A549 (cell line): ENCODE measurements at regions of chr19 and their contacts with region 1.

Region 1: DNA sequence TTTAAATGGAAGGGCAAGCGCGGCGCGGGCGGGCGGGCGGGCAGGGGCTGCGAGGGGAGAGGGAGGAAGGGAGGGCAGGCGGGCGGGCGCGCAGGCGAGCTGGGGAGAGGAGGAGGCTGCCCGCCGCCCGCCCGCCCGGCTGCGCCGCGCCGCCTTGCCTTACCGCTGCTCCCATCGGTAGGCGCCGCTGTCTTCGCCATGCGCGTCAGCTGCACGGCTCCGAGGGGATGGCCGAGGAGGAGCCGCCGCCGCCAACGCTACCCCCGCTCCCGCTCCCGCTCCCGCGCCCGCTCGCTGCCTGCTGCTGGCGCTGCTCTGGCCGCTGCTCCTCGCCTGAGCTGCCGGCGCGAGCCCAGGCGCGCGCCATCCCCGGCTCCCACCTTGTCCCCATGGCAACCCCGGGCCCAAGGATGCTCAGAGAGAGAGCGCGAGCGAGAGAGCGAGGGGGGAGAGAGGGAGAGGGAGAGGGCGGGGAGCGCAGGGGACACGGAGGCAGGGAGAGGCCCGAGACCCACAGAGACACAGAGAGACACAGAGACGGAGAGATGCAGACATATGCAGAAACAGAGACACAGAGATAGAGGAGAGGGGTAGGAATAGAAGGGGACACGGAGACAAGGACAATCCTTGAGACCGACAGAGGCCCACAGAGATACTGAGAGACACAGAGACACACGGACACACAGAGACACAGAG is 40.3 kb downstream of the DEDD2 start:
- DNase-seq: peak; percentile 90
- ATAC-seq: peak; percentile 84 to 95
- H3K4me3 ChIP-seq: peak overlapping the region; percentile 56
- H3K27ac ChIP-seq: peak overlapping the region in 1 of 2 experiments; percentile 52; a peak in 2 of 6 replicates
- H3K4me1 ChIP-seq: peaks cover 16% of the 10 kb centered on the region
- CTCF ChIP-seq: peak; percentile 73
- EP300 ChIP-seq: no peak
- POLR2A ChIP-seq: no peak
- RAD21 ChIP-seq: peak in 1 of 2 experiments; percentile 39; a peak in 2 of 5 replicates

Region 2: DNA sequence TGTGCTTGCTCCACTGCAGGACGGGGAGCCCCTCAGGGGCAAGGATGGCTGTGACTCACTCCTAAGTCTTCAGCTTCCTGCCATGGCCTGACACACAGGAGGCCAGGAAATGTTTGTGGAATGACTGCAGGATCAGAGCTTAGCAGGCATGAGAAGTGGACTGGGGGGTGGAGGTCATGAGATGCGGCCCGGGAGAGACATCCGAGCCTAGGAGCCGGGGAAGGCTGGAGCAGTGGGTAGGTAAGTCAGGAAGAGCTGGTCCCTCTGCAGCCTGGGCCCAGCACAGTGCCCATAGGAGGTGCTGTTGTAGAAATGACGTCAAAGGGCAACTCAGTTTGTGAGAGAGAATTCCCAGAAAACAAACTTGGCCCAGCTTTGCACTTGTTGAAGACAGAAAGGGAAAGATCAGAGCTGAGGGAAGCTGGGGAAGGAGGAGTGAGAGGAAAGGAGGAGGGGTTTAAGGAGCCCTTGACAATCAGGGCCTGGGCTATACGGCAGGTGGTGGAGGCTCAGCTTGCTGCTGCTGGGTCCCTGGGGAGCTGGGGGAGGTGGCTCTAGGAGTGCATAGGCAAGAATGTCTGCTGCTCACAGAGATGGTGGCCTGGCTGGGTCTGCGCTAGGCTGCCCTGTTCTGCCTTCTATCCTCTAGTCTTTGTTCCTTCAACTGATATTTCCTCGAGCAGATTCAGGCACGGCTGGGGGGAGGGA is 63.3 kb before region 1 on chr19:
- CTCF ChIA-PET with region 1: interaction called, 213 read pairs
- POLR2A ChIA-PET with region 1: no interaction called
- DNase-seq: peak; percentile 88 to 97
- ATAC-seq: peak; percentile 75 to 90
- H3K4me3 ChIP-seq: no peak overlapping the region
- H3K27ac ChIP-seq: peak overlapping the region; percentile 57 to 75
- H3K4me1 ChIP-seq: peaks cover 28% of the 10 kb centered on the region
- CTCF ChIP-seq: peak; percentile 55
- EP300 ChIP-seq: no peak
- POLR2A ChIP-seq: no peak
- RAD21 ChIP-seq: no peak

Region 3: DNA sequence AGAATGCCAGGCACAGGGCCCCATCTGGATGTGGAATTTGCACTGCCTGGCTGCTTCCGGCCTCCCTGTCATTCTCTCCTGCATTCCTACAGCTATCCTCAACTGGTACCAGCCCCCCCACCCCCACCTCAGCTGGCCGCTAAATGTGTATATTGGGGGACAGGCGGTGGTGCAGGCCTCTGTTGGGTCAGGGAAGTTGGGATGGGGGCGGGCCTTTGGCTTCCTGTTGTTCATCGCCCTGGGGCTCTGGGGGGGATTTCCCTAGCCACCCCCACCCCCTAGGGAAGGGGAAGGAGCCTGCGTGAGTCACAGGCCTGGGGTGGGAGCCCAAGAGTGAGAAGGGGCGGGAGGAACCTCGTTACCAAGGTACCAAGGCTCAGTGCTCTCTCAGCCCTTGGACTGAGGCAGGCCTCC is 55.5 kb before region 1 on chr19:
- CTCF ChIA-PET with region 1: interaction called, 213 read pairs
- POLR2A ChIA-PET with region 1: no interaction called
- DNase-seq: peak in 1 of 2 experiments; percentile 66
- ATAC-seq: peak; percentile 10 to 37; a peak in 3 of 6 replicates
- H3K4me3 ChIP-seq: no peak overlapping the region
- H3K27ac ChIP-seq: peak overlapping the region in 1 of 2 experiments; percentile 56; a peak in 3 of 6 replicates
- H3K4me1 ChIP-seq: peaks cover 14% of the 10 kb centered on the region
- CTCF ChIP-seq: no peak
- EP300 ChIP-seq: no peak
- POLR2A ChIP-seq: no peak
- RAD21 ChIP-seq: no peak

Region 4: GRCh38 chr19:42140125-42140754 is 36.9 kb before region 1 on chr19:
- CTCF ChIA-PET with region 1: interaction called, 323 read pairs
- POLR2A ChIA-PET with region 1: interaction called, 3 read pairs
- DNase-seq: peak in 1 of 2 experiments; percentile 53
- ATAC-seq: peak; percentile 72 to 81
- H3K4me3 ChIP-seq: no peak overlapping the region
- H3K27ac ChIP-seq: no peak overlapping the region
- H3K4me1 ChIP-seq: no peaks in the 10 kb centered on the region
- CTCF ChIP-seq: no peak
- EP300 ChIP-seq: no peak
- POLR2A ChIP-seq: no peak
- RAD21 ChIP-seq: 0 out of 5 replicates have a peak, but pooled peaks of 1 of the 2 experiments have one; percentile 9

Region 5: GRCh38 chr19:42154471-42155323 is 22.4 kb before region 1 on chr19:
- CTCF ChIA-PET with region 1: interaction called, 24 read pairs
- POLR2A ChIA-PET with region 1: no interaction called
- DNase-seq: no peak
- ATAC-seq: peak; percentile 28 to 57; a peak in 3 of 6 replicates
- H3K4me3 ChIP-seq: no peak overlapping the region
- H3K27ac ChIP-seq: no peak overlapping the region
- H3K4me1 ChIP-seq: no peaks in the 10 kb centered on the region
- CTCF ChIP-seq: no peak
- EP300 ChIP-seq: no peak
- POLR2A ChIP-seq: no peak
- RAD21 ChIP-seq: no peak

Region 6: DNA sequence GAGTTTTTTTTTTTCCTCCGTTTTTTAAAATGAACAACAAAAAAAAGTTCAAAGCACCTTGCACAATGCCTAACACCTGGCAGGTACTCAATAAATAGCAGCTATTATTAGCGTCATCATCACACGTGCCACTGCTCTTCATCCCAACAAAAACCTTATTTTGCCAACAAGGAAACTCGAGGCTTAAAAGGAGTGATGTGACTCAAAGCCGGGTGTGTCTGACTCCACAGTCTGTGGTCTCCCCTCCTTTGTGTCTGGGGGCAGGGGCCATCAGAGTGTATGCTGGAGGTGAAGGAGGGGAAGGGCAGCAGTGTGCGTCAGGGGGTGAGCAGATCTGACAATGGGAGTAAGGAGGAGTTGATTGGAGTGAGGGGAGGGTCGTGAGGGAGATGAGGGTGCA is 10.8 kb before region 1 on chr19:
- CTCF ChIA-PET with region 1: interaction called, 34 read pairs
- POLR2A ChIA-PET with region 1: interaction called, 3 read pairs
- DNase-seq: no peak
- ATAC-seq: no peak
- H3K4me3 ChIP-seq: no peak overlapping the region
- H3K27ac ChIP-seq: no peak overlapping the region
- H3K4me1 ChIP-seq: no peaks in the 10 kb centered on the region
- CTCF ChIP-seq: no peak
- EP300 ChIP-seq: no peak
- POLR2A ChIP-seq: no peak
- RAD21 ChIP-seq: no peak

Region 7: DNA sequence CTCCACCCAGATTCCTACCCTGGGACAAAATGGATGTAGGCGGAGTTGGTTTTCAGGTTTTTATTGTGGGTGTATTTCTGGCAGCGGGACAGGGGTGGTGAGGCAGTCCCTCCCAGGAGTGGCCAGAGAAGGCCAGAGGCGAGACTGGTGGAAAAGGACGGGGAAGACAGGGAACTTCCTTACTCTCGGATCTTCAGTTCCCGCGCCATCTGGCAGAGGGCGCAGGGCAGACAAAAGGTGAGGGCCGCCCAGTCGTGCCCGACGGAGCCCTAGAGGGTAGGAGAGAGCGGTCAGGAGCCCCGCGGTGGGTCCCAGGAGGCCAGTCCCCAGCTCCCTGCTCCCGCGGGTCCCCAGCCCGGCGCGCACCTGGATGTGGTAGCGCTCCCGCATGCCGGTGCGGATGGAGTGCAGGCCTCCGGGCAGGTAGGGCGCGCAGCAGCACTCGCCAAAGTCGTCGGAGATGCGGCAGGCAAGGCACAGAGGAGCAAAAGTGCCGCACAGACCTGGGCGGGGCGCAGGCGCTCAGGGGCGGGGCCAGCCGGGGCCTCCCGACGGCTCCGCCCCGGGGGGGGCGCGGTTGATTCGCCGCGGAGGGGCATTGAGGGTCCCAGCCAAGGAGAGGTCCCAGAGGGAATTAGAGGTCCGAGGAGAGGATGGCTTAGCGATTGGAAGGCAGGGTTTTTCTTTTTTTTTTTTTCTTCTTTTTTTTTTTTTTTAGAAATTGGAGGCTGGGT is 210.0 kb after region 1 on chr19:
- CTCF ChIA-PET with region 1: no interaction called
- POLR2A ChIA-PET with region 1: no interaction called
- DNase-seq: peak; percentile 95 to 100
- ATAC-seq: peak; percentile 92 to 97
- H3K4me3 ChIP-seq: peak overlapping the region; percentile 49
- H3K27ac ChIP-seq: peak overlapping the region; percentile 80 to 86
- H3K4me1 ChIP-seq: peaks cover 9% of the 10 kb centered on the region; the same call in 2 of the 3 replicates
- CTCF ChIP-seq: peak; percentile 93
- EP300 ChIP-seq: no peak
- POLR2A ChIP-seq: peak; percentile 98
- RAD21 ChIP-seq: peak; percentile 56 to 74

Region 8: GRCh38 chr19:42401365-42402303 is 224.5 kb after region 1 on chr19:
- CTCF ChIA-PET with region 1: interaction called, 10 read pairs
- POLR2A ChIA-PET with region 1: interaction called, 3 read pairs
- DNase-seq: peak; percentile 89 to 96
- ATAC-seq: peak; percentile 63 to 75
- H3K4me3 ChIP-seq: peak overlapping the region; percentile 56
- H3K27ac ChIP-seq: peak overlapping the region; percentile 72 to 84
- H3K4me1 ChIP-seq: peaks cover 19% of the 10 kb centered on the region
- CTCF ChIP-seq: peak; percentile 99
- EP300 ChIP-seq: no peak
- POLR2A ChIP-seq: peak; percentile 91
- RAD21 ChIP-seq: peak in 1 of 2 experiments; percentile 67; a peak in 4 of 5 replicates